ENCODE measurements at regions of chr7 and their contacts with region 1.

Region 1: GRCh38 chr7:64307254-64308015 is 6.3 kb upstream of the ZNF736 start:
- DNase-seq: peak; percentile 97
- ATAC-seq: peak; percentile 98
- H3K4me3 Mint-ChIP-seq: peak overlapping the region; percentile 89
- H3K27ac Mint-ChIP-seq: peak overlapping the region; percentile 94
- H3K4me1 Mint-ChIP-seq: peaks cover 14% of the 10 kb centered on the region
- H3K27me3 Mint-ChIP-seq: no peaks in the 10 kb centered on the region
- CTCF ChIP-seq: peak; percentile 9

Region 2: DNA sequence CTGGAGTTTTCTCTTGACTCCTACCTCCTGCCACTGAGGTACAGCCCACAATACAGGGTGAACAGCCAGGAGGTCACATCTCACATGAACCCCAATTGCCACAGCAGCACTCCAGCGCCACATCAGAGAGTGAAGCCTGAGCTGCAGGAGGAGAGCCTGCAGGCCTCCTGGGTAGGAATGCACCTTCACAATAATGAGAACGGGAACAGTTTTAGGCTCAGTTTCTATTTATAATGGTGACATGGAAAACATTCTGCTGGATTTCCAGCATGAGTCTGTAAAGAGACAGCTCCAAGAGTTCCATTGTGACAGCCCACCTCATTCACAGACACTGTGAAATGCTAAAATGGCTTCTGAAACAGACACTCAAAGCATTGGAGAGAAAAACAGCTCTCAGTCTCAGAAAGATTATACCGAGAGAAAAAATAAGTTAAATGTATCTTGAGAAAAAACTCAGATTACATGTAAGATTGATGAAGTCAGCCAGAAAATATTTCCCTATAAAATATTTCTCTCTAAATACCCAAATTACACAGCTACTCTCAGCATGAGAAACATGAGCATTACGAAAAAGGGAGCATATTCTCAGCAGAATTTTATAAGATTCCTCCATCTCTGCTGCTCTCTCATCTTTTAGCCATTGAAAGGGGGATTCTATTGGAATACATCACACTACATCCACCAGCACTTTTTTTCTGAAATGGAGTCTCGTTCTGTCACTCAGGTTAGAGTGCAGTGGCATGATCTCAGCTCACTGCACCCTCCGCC is 244.1 kb after region 1 on chr7:
- CTCF ChIA-PET with region 1: no interaction called
- POLR2A ChIA-PET with region 1: no interaction called
- intact Hi-C with region 1: no loop called
- DNase-seq: no peak
- ATAC-seq: no peak
- H3K4me3 Mint-ChIP-seq: no peak overlapping the region
- H3K27ac Mint-ChIP-seq: no peak overlapping the region
- H3K4me1 Mint-ChIP-seq: peaks cover 12% of the 10 kb centered on the region
- H3K27me3 Mint-ChIP-seq: no peaks in the 10 kb centered on the region
- CTCF ChIP-seq: no peak

Region 3: GRCh38 chr7:64794171-64794844 is 486.9 kb after region 1 on chr7 and contains the start of gene ZNF138:
- CTCF ChIA-PET with region 1: no interaction called
- POLR2A ChIA-PET with region 1: no interaction called
- intact Hi-C with region 1: loop called (anchors 10 kb)
- DNase-seq: peak; percentile 99
- ATAC-seq: peak; percentile 99
- H3K4me3 Mint-ChIP-seq: peak within 1 kb of the TSS; percentile 99
- H3K27ac Mint-ChIP-seq: peak within 1 kb of the TSS; percentile 99
- H3K4me1 Mint-ChIP-seq: peaks cover 21% of the 10 kb centered on the region
- H3K27me3 Mint-ChIP-seq: no peaks in the 10 kb centered on the region
- CTCF ChIP-seq: peak; percentile 13
- total RNA-seq, gene ZNF138: 9.4 to 11.7 TPM

Measured in activated CD8-positive, alpha-beta T cell treated with anti-CD3 and anti-CD28 coated beads for 36 hours (primary cell).